Dendritic cell treated with granulocyte-macrophage colony-stimulating factor and Interleukin-4, amounts not matched to agents 40 ng/mL and 50 ng/mL, for 4 days (primary cell): ENCODE measurements at regions of chr2 and their contacts with region 1.

Region 1: GRCh38 chr2:235746257-235747084 is 252.6 kb downstream of the AGAP1 start:
- H3K4me3 Mint-ChIP-seq: no peak overlapping the region
- H3K27ac Mint-ChIP-seq: no peak overlapping the region
- H3K4me1 Mint-ChIP-seq: no peaks in the 10 kb centered on the region
- H3K27me3 Mint-ChIP-seq: peaks cover 6% of the 10 kb centered on the region

Region 2: DNA sequence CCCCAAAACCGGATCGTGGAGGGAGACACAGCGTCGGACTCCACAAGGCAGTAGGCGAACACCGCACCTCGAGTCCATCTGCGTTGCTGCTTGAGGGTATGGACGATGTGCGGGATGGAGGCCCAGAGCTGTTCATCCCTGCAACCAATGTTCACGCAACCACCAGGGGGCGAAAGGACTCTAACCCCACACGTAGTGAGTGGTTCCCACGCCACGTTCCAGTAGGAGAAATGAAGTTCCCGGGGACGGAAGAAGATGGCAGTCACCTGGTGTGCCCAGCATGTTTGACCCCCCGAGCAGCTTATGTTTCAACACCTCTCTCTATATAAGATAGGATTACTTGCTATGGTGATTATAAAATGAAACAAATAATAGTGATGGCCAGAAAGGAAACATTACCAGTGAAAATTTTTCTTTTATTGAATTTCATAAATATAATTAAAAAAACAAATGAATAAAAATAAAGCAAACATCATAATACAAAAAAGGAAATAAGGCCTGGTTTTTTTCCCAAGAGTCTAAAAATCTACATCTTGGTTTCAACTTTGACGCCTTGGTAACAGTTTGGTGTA is 610.4 kb before region 1 on chr2:
- intact Hi-C with region 1: loop called (anchors 1 kb)
- H3K4me3 Mint-ChIP-seq: no peak overlapping the region
- H3K27ac Mint-ChIP-seq: no peak overlapping the region
- H3K4me1 Mint-ChIP-seq: no peaks in the 10 kb centered on the region
- H3K27me3 Mint-ChIP-seq: peaks cover 19% of the 10 kb centered on the region

Region 3: DNA sequence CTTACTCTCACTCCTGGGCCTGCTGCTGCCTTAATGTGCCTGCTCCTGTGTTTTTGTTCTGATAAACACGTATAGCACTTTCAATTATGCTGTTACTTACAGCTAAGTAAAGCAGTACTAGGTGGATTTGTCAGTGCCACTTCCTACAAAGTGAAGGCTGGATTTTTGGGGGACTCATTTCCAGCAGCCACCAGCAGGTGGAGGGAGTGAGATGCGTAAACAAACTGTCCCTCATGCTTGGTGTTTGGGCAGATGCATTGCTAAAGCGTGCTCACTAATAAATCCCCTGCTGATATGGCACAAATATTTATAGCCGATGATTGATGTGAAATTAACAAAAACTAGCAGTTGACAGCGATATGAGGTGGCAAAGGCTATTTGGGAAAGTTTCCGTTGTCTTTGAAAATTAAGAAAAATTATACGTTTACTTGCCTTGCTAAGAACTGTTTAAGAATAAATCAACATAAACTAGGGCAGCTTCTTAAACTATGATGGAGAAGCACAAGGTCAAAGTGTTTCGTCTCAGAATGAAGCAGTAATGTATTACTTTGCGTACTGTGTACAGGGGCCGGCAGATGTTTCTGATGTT is 151.0 kb before region 1 on chr2:
- intact Hi-C with region 1: loop called (anchors 1 kb)
- H3K4me3 Mint-ChIP-seq: no peak overlapping the region
- H3K27ac Mint-ChIP-seq: no peak overlapping the region
- H3K4me1 Mint-ChIP-seq: no peaks in the 10 kb centered on the region
- H3K27me3 Mint-ChIP-seq: peaks cover 3% of the 10 kb centered on the region